ENCODE measurements at regions of chr15 and their contacts with region 1.

Region 1: DNA sequence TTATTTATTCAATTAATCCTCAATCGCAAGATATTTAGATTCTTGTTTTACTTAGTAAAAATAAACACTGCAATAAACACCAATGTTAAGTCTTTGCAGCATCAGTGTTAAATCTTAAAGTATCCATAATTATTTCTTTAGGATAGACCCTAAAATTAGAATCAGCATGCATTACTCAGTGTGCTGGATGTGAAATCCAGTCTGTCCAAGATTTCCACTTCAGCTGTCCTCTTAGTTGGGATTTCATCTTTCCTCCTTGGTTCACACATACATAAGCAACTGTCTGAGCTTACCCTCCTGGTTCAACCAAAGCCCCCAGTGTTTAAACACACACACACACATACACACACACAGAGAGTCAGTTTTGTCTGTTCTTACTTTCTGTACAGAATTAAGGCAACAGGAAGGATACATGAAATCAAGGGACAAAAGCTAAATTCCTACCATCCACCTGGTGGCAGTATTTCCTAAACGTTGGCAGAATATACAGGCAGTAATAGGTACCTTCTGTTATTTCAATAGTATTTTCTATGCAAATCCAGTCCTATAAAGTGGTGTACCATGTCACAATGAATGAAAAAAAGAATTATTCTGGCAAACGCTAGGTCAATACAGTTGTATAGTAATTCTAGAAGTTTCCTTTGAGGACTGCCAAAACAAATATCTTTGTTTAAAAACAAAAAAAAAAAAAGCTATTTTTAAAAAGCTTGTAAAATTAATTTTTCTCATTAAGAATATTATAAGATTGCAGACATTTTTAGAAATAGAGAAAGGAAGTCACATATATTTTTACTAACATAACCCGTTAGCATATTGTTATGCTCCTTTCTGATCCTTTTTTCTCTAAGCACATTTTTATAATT is 27.3 kb upstream of the DMXL2 start:
- DNase-seq: peak; percentile 81
- H3K4me3 ChIP-seq: no peak overlapping the region
- H3K27ac ChIP-seq: no peak overlapping the region
- H3K4me1 ChIP-seq: peaks cover 2% of the 10 kb centered on the region
- H3K27me3 ChIP-seq: peaks cover 2 to 7% of the 10 kb centered on the region in 2 experiments
- CTCF ChIP-seq: peak; percentile 47 to 62
- POLR2A ChIP-seq: no peak

Region 2: GRCh38 chr15:51589867-51590542 is 59.9 kb before region 1 on chr15:
- CTCF ChIA-PET with region 1: no interaction called
- POLR2A ChIA-PET with region 1: no interaction called
- dilution Hi-C with region 1: no loop called
- intact Hi-C with region 1: no loop called
- DNase-seq: no peak
- H3K4me3 ChIP-seq: no peak overlapping the region
- H3K27ac ChIP-seq: no peak overlapping the region
- H3K4me1 ChIP-seq: no peaks in the 10 kb centered on the region
- H3K27me3 ChIP-seq: no peaks in the 10 kb centered on the region
- CTCF ChIP-seq: no peak
- POLR2A ChIP-seq: no peak

Region 3: DNA sequence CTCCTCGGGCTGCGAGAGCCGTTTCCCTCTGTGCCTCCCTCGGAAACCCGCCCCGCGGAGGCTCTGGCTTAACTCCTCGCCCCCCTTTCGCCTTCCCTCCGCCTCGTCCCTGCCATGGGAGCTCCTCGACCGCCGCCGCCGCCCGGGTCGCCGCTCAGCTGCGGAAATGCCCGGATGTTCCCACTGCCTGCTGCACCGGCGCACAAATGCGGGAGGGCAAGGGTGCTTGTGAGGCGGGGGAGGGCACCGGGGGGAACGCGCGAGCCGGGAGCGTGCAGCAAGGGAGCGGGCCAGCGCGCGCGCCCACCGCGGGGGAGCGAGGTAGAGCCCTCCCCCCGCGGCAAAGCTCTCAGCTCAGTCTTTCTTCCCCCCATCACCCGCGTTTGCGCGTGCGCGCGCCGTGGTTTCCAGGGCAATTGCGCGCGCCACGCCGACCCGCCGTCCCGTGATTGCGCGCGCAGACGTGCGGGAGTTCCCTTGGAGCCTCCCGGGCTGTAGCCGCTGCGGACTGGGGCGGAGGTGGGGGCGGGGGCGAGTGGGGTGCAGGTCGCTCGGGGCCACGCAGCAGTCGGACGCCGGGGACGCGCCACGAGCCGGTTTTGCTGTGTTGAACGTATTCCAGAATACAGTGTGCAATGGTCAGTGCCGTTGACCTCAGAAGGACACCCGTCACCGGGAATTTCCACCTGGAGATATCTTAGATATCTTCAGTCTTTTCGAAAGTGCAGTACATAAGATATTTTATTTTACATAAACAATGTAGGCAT is 27.1 kb before region 1 on chr15 and contains the start of gene DMXL2:
- CTCF ChIA-PET with region 1: interaction called, 13 read pairs
- POLR2A ChIA-PET with region 1: no interaction called
- dilution Hi-C with region 1: no loop called
- intact Hi-C with region 1: no loop called
- DNase-seq: peak; percentile 85
- H3K4me3 ChIP-seq: peak within 1 kb of the TSS; percentile 39 to 81 (median 66)
- H3K27ac ChIP-seq: no peak within 1 kb of the TSS
- H3K4me1 ChIP-seq: peaks cover 6% of the 10 kb centered on the region
- H3K27me3 ChIP-seq: peaks cover 2 to 3% of the 10 kb centered on the region in 2 experiments
- CTCF ChIP-seq: no peak
- POLR2A ChIP-seq: no peak
- total RNA-seq, gene DMXL2: 9.7 and 10.8 TPM in 2 replicates

Region 4: GRCh38 chr15:51721199-51721960 is 71.5 kb after region 1 on chr15:
- CTCF ChIA-PET with region 1: interaction called, 10 read pairs
- POLR2A ChIA-PET with region 1: no interaction called
- dilution Hi-C with region 1: no loop called
- intact Hi-C with region 1: no loop called
- DNase-seq: peak; percentile 86
- H3K4me3 ChIP-seq: peak overlapping the region in 1 of 3 experiments; percentile 2
- H3K27ac ChIP-seq: peak overlapping the region; percentile 60
- H3K4me1 ChIP-seq: peaks cover 15% of the 10 kb centered on the region
- H3K27me3 ChIP-seq: no peaks in the 10 kb centered on the region
- CTCF ChIP-seq: no peak
- POLR2A ChIP-seq: no peak

Region 5: DNA sequence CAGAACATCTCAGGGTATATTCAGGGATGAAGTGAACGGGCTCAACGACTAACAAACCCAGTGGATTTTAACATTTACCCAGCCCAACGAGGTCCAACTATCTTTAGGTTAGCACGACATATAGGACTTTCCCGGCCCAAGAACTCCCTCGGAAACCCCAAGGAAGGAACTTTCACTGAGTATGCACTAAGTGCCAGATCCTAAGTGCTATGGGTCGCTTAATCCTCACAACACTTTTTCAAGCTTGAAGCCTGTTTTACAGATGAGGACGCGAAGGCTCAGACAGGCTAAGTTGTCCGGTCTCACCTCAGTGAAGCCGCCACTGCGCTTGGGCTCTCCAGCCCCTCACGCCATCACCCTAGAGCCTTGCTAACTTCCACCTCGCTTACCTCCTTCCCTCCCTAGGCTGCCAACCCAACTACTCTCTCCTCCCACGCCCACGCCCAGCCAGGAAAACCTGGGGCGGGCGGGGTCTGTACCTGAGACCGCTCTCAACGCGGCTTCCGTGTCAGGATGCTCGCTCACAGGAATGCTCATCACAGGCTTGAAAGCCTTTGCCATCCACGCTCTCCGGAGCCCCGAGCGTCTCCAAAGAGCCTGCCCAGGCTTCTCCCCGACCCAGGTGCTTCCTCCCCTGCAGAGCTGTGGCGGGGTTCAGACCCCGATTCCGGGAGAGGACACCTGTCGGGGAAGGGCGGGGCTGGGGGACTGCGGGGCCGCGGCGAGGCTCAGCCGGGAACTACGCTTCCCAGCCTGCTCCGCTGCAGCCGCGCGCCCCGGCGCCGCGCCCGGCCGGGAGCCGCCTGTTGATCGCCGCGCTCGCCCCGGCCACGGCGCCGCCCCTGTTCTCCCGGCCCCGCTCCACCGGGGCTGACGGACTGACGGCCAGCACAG is 101.1 kb after region 1 on chr15 and contains the start of gene TMOD2:
- CTCF ChIA-PET with region 1: interaction called, 15 read pairs
- POLR2A ChIA-PET with region 1: no interaction called
- dilution Hi-C with region 1: no loop called
- intact Hi-C with region 1: no loop called
- DNase-seq: no peak
- H3K4me3 ChIP-seq: peak within 1 kb of the TSS; percentile 26 to 54 (median 40)
- H3K27ac ChIP-seq: no peak within 1 kb of the TSS
- H3K4me1 ChIP-seq: peaks cover 3% of the 10 kb centered on the region
- H3K27me3 ChIP-seq: peaks cover 59 to 65% of the 10 kb centered on the region in 2 experiments
- CTCF ChIP-seq: no peak
- POLR2A ChIP-seq: no peak
- total RNA-seq, gene TMOD2: 2.5 and 2.7 TPM in 2 replicates

Region 6: GRCh38 chr15:51768018-51768417 is 118.1 kb after region 1 on chr15:
- CTCF ChIA-PET with region 1: interaction called, 942 read pairs
- POLR2A ChIA-PET with region 1: no interaction called
- dilution Hi-C with region 1: no loop called
- intact Hi-C with region 1: no loop called
- DNase-seq: no peak
- H3K4me3 ChIP-seq: no peak overlapping the region
- H3K27ac ChIP-seq: no peak overlapping the region
- H3K4me1 ChIP-seq: peaks cover 5% of the 10 kb centered on the region
- H3K27me3 ChIP-seq: peaks cover 3% of the 10 kb centered on the region in 2 experiments
- CTCF ChIP-seq: no peak
- POLR2A ChIP-seq: no peak

Region 7: DNA sequence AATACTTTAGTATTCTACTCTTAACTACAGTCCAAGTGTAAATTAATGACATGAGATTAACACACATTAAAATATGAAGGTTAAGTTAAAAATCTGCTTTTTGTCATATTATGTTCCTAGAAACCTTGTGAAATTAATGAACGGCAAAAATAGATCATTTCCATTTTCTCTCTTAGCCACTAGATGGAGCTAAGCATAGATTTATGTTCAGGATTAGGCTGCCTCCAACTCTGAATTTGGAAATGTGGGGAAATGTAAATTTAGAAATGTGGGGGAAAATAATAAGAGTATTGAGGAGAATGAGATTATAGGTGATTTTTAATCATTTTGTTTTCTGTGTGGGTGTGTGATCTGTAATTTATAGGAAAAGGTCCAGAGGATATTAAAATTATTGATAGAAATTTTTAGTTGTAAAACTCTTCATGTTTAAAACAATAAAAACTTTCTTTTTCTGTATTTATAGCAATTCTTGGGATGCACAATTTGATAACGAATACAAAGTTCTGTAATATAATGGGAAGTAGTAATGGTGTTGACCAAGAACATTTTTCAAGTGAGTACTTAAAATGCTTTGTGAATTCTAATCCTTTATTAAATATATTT is 238.8 kb after region 1 on chr15:
- CTCF ChIA-PET with region 1: interaction called, 11 read pairs
- POLR2A ChIA-PET with region 1: no interaction called
- dilution Hi-C with region 1: no loop called
- intact Hi-C with region 1: no loop called
- DNase-seq: peak; percentile 43
- H3K4me3 ChIP-seq: no peak overlapping the region
- H3K27ac ChIP-seq: no peak overlapping the region
- H3K4me1 ChIP-seq: peaks cover 9% of the 10 kb centered on the region
- H3K27me3 ChIP-seq: no peaks in the 10 kb centered on the region
- CTCF ChIP-seq: peak; percentile 44 to 48
- POLR2A ChIP-seq: no peak

Region 8: GRCh38 chr15:51917493-51917892 is 267.6 kb after region 1 on chr15:
- CTCF ChIA-PET with region 1: interaction called, 10 read pairs
- POLR2A ChIA-PET with region 1: no interaction called
- dilution Hi-C with region 1: no loop called
- intact Hi-C with region 1: no loop called
- DNase-seq: peak; percentile 47
- H3K4me3 ChIP-seq: no peak overlapping the region
- H3K27ac ChIP-seq: no peak overlapping the region
- H3K4me1 ChIP-seq: no peaks in the 10 kb centered on the region
- H3K27me3 ChIP-seq: no peaks in the 10 kb centered on the region
- CTCF ChIP-seq: peak; percentile 21 to 41
- POLR2A ChIP-seq: no peak

Measured in endothelial cell of umbilical vein (primary cell).